Caco-2 (cell line): ENCODE measurements at regions of chr14 and their contacts with region 1.

Region 1: DNA sequence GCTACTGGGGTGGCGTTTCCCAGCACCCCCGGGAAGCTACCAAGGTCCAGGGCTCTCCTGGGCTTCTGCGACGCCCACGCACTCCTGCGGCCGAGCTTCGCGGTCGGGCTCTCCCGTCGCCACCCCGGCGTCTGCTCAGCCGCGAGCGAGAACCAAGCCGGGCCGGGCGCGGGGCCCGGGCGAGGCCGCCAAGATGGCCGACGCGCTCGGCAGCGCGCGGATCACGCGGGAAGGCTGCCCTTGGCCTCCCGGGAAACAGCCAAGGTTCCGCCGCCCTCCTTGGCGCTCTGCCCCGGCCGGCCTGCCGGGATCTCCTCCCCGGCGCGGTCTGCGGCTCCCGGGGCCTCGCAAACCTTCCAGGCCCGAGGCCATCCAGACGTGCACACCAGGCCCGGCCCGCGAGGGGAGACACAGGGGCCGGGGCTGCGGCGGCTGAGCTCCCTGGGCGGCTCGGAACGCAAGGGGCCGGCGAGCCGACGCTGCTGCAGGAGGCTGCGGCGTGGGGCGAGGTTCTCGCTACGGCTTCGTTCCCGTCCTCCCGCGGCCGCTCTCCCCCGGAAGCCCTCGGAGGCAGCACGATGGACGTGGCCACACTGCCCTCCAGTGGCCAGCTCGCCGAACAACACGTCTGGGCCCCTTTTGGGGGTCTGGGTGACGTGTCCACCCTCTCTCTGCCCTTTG is 23.5 kb upstream of the ZFP36L1 start:
- DNase-seq: peak; percentile 89 to 94
- H3K4me3 ChIP-seq: peak overlapping the region; percentile 53
- H3K4me3 Mint-ChIP-seq: peak overlapping the region; percentile 77
- H3K27ac Mint-ChIP-seq: peak overlapping the region; percentile 90
- H3K4me1 ChIP-seq: peaks cover 27% of the 10 kb centered on the region
- H3K4me1 Mint-ChIP-seq: peaks cover 18% of the 10 kb centered on the region
- H3K27me3 ChIP-seq: no peaks in the 10 kb centered on the region
- H3K27me3 Mint-ChIP-seq: no peaks in the 10 kb centered on the region
- CTCF ChIP-seq: peak; percentile 88 to 97

Region 2: GRCh38 chr14:67837011-67837624 is 979.3 kb before region 1 on chr14:
- CTCF ChIA-PET with region 1: no interaction called
- POLR2A ChIA-PET with region 1: no interaction called
- intact Hi-C with region 1: loop called (anchors 2 kb)
- DNase-seq: peak in 1 of 2 experiments; percentile 73
- H3K4me3 ChIP-seq: no peak overlapping the region
- H3K4me3 Mint-ChIP-seq: no peak overlapping the region
- H3K27ac Mint-ChIP-seq: no peak overlapping the region
- H3K4me1 ChIP-seq: no peaks in the 10 kb centered on the region
- H3K4me1 Mint-ChIP-seq: no peaks in the 10 kb centered on the region
- H3K27me3 ChIP-seq: no peaks in the 10 kb centered on the region
- H3K27me3 Mint-ChIP-seq: no peaks in the 10 kb centered on the region
- CTCF ChIP-seq: peak; percentile 56 to 57

Region 3: DNA sequence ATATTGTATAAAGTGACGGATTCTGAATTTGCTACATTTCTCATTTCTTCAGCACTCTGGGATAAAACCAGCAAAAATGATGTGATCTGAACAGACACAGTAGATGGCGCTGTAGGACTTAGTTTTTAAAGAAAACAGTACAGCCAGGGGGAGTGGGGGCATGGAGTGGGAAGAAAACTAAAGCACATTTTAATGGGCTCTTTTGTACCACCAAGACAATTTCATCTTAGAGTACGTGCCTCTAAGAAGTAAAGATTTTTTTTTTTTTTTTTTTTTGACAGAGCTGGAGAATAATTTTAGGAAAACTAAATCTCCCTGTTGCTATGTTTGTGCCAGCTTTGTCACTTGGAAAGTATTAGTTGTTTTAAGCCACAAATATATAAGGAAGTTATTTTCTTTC is 872.5 kb before region 1 on chr14:
- CTCF ChIA-PET with region 1: no interaction called
- POLR2A ChIA-PET with region 1: no interaction called
- intact Hi-C with region 1: loop called (anchors 2 kb)
- DNase-seq: peak; percentile 74 to 75
- H3K4me3 ChIP-seq: no peak overlapping the region
- H3K4me3 Mint-ChIP-seq: no peak overlapping the region
- H3K27ac Mint-ChIP-seq: no peak overlapping the region
- H3K4me1 ChIP-seq: peaks cover 23% of the 10 kb centered on the region
- H3K4me1 Mint-ChIP-seq: peaks cover 27% of the 10 kb centered on the region
- H3K27me3 ChIP-seq: no peaks in the 10 kb centered on the region
- H3K27me3 Mint-ChIP-seq: no peaks in the 10 kb centered on the region
- CTCF ChIP-seq: peak; percentile 62 to 77

Region 4: DNA sequence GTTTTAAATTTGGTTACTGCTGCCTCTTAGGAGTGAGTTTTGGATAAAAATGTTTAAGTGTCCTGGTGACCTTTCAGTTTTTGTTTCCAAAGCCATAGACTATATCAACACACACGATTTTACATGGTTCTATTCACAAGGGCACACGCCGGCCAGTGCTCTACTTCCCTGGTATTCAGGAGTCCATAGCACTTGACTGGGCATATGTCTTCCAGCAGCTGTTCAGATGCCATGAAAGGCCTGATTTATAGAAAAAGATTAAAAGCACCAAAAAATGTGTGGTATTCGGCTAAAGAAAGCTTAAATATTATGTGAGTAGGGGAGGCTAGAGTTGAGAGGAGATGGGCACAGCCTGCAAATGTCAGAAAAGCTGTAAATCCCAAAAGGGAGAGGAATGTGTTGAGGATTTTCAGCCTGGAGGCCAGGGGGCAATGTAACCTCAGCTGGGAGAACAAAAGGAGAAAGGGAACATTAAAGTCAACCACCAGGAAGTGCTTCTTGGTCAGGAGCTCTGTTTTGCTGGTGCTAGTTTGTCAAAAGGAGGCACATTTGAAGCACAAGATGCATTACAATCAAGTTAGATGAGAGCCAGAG is 518.4 kb before region 1 on chr14:
- CTCF ChIA-PET with region 1: no interaction called
- POLR2A ChIA-PET with region 1: no interaction called
- intact Hi-C with region 1: loop called (anchors 5 kb)
- DNase-seq: peak; percentile 36 to 49
- H3K4me3 ChIP-seq: no peak overlapping the region
- H3K4me3 Mint-ChIP-seq: no peak overlapping the region
- H3K27ac Mint-ChIP-seq: peak overlapping the region; percentile 21
- H3K4me1 ChIP-seq: peaks cover 35% of the 10 kb centered on the region
- H3K4me1 Mint-ChIP-seq: peaks cover 27% of the 10 kb centered on the region
- H3K27me3 ChIP-seq: no peaks in the 10 kb centered on the region
- H3K27me3 Mint-ChIP-seq: no peaks in the 10 kb centered on the region
- CTCF ChIP-seq: no peak

Region 5: DNA sequence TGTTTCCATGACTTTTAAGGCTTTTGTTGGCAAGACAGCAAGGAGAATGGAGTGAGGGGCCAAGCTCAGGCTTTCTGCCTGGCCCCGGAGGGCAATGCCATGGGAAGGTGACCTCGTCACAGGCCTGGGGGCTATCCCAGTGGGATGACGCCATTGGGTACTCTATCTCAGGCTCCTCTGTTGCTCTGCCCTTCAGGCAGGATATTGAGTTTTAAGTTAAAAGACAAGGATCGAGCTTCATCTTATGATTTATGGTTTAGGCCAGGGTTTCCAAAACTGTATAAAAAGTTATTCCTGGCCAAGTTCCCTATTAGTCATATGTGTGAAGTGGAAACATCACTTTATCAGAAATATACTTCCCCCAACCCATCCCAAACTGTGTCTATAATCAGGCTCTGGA is 151.3 kb before region 1 on chr14:
- CTCF ChIA-PET with region 1: no interaction called
- POLR2A ChIA-PET with region 1: no interaction called
- intact Hi-C with region 1: loop called (anchors 5 kb)
- DNase-seq: no peak
- H3K4me3 ChIP-seq: no peak overlapping the region
- H3K4me3 Mint-ChIP-seq: no peak overlapping the region
- H3K27ac Mint-ChIP-seq: no peak overlapping the region
- H3K4me1 ChIP-seq: peaks cover 10% of the 10 kb centered on the region; the same call in 1 of the 2 replicates
- H3K4me1 Mint-ChIP-seq: peaks cover 24% of the 10 kb centered on the region
- H3K27me3 ChIP-seq: no peaks in the 10 kb centered on the region
- H3K27me3 Mint-ChIP-seq: no peaks in the 10 kb centered on the region
- CTCF ChIP-seq: no peak

Region 6: GRCh38 chr14:68795597-68796417 is 20.6 kb before region 1 on chr14:
- CTCF ChIA-PET with region 1: interaction called, 6 read pairs
- POLR2A ChIA-PET with region 1: interaction called, 14 read pairs
- intact Hi-C with region 1: loop called (anchors 1 kb)
- DNase-seq: peak; percentile 90 to 93
- H3K4me3 ChIP-seq: peak overlapping the region; percentile 86
- H3K4me3 Mint-ChIP-seq: peak overlapping the region; percentile 88
- H3K27ac Mint-ChIP-seq: peak overlapping the region; percentile 96
- H3K4me1 ChIP-seq: peaks cover 10% of the 10 kb centered on the region
- H3K4me1 Mint-ChIP-seq: peaks cover 11% of the 10 kb centered on the region
- H3K27me3 ChIP-seq: no peaks in the 10 kb centered on the region
- H3K27me3 Mint-ChIP-seq: no peaks in the 10 kb centered on the region
- CTCF ChIP-seq: peak; percentile 68 to 81